Endothelial cell of umbilical vein (primary cell): ENCODE measurements at regions of chr15 and their contacts with region 1.

Region 1: GRCh38 chr15:56245871-56246814 is 2.5 kb upstream of the RFX7 start:
- DNase-seq: peak; percentile 86
- H3K4me3 ChIP-seq: peak overlapping the region in 2 of 3 experiments; percentile 16 to 32
- H3K27ac ChIP-seq: no peak overlapping the region
- H3K4me1 ChIP-seq: peaks cover 22% of the 10 kb centered on the region
- H3K27me3 ChIP-seq: peaks cover 0 to under 1% of the 10 kb centered on the region in 2 experiments
- CTCF ChIP-seq: peak; percentile 100
- POLR2A ChIP-seq: peak; percentile 24

Region 2: GRCh38 chr15:55993111-55993803 is 252.9 kb before region 1 on chr15 and contains the start of gene NEDD4:
- CTCF ChIA-PET with region 1: interaction called, 10 read pairs
- POLR2A ChIA-PET with region 1: no interaction called
- dilution Hi-C with region 1: no loop called
- intact Hi-C with region 1: loop called (anchors 2 kb)
- DNase-seq: peak; percentile 92
- H3K4me3 ChIP-seq: peak within 1 kb of the TSS; percentile 79 to 97 (median 93)
- H3K27ac ChIP-seq: peak within 1 kb of the TSS; percentile 68
- H3K4me1 ChIP-seq: peaks cover 20% of the 10 kb centered on the region
- H3K27me3 ChIP-seq: no peaks in the 10 kb centered on the region
- CTCF ChIP-seq: peak; percentile 35 to 76
- POLR2A ChIP-seq: peak; percentile 75
- total RNA-seq, gene NEDD4: 34.2 and 39.0 TPM in 2 replicates

Region 3: DNA sequence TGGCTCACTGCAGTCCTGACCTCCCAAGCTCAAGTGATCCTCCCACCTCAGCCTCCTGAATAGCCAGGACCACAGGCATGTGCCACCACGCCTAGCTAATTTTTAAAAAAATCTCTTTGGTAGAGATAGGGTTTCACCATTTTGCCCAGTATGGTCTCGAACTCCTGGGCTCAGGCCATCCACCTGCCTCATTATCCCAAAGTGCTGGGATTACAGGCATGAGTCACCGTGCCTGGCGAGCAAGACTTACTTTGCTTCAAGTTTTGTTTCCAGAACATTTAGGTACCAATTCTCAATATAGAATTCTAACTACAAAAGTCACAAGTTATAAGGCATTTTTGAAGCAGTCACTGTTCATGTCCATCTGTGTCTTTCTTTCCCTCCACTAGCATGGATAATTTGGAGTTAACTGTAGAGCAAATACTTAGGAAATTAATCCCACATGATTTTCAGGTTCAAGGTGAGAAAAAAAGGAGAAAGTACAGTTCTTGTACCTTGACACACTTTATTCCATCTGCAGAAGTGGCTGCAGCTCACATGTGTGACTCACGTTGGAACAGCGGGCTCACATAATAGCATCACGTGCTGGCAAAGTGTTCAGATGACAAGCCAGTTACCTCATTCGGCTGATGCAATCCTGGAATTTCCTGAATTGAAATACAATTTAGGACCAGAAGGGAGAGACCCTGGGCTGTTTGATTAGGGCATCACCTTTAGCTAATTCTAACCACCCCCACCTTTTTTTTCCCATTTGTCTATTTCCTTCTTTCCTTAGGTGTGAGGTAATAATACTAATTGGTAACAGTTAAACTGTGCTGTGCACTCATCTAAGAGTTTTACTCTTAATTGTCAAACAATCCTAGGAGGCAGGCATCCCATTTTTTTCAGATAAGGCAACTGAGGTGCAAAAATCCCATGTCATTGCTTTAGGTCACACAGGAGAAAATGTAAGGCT is 205.8 kb before region 1 on chr15:
- CTCF ChIA-PET with region 1: no interaction called
- POLR2A ChIA-PET with region 1: no interaction called
- dilution Hi-C with region 1: no loop called
- intact Hi-C with region 1: loop called (anchors 10 kb)
- DNase-seq: peak; percentile 92
- H3K4me3 ChIP-seq: no peak overlapping the region
- H3K27ac ChIP-seq: peak overlapping the region; percentile 88
- H3K4me1 ChIP-seq: peaks cover 23% of the 10 kb centered on the region
- H3K27me3 ChIP-seq: no peaks in the 10 kb centered on the region
- CTCF ChIP-seq: no peak
- POLR2A ChIP-seq: no peak

Region 4: DNA sequence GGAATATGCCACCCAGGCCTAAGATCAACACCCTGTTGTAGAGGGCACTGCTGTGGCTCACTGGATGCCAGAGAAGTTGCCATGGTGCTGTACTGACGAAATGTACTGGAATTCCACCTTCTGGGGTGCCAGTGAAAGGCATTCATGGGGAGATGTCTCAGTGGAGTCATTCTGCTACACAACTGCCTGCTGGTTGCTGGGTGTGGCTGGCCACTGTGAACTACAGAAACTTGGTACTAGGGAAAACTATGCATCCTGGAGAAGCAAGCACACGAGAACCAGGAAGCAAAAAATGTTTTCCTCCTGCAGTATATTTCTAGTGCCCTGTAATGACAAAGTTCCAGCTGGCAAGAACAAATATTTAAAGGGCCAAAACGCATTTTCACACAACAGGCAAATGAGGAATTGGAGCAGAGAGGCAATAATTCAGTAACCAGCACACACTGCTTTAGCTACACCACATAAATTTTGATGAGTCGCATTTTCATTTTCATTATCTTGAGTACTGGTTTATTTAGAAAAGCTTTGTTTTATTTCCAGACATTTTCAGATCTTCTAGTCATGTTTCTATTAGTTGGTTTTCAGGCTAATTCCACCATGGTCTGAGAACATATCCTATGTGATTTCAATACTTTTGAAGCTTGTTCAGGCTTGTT is 15.8 kb after region 1 on chr15:
- CTCF ChIA-PET with region 1: interaction called, 10 read pairs
- POLR2A ChIA-PET with region 1: no interaction called
- dilution Hi-C with region 1: no loop called
- intact Hi-C with region 1: no loop called
- DNase-seq: no peak
- H3K4me3 ChIP-seq: no peak overlapping the region
- H3K27ac ChIP-seq: no peak overlapping the region
- H3K4me1 ChIP-seq: no peaks in the 10 kb centered on the region
- H3K27me3 ChIP-seq: peaks cover 0 to 4% of the 10 kb centered on the region in 2 experiments
- CTCF ChIP-seq: no peak
- POLR2A ChIP-seq: no peak

Region 5: DNA sequence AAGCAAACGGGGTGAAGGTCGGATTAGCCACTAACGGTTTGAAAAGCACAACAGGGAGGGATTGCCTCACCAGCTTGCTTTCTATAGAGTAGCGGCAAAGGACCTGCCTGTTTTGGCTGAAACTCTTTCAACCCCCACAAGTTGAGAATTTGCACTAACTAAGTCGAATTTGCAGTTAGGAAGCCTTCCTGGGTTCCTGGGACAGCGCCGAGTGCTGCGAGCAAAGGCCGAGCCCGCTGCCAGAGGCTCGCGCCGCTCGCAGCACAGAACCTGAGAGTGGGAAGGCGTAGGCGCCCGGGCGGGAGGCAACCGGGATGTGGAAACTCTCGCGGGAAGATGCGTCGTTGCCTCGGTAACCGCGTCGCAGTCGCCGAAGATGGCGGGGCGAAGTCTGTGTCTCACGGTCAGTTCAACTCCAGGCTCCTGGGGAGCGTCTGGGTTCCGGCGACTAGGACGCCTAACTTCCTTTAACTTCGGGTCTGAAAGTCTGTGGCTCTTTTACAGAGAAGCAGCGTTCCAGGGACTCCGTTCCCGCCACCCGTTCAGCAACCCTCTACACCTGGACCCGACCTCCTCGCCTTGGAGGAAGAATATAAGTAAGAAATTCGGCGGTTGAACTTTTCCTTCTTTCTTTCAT is 119.0 kb after region 1 on chr15 and contains the start of gene TEX9:
- CTCF ChIA-PET with region 1: interaction called, 3 read pairs
- POLR2A ChIA-PET with region 1: no interaction called
- dilution Hi-C with region 1: no loop called
- intact Hi-C with region 1: loop called (anchors 5 kb)
- DNase-seq: peak; percentile 74
- H3K4me3 ChIP-seq: peak within 1 kb of the TSS; percentile 55 to 98 (median 90)
- H3K27ac ChIP-seq: no peak within 1 kb of the TSS
- H3K4me1 ChIP-seq: peaks cover 12% of the 10 kb centered on the region
- H3K27me3 ChIP-seq: peaks cover 0 to 7% of the 10 kb centered on the region in 2 experiments
- CTCF ChIP-seq: no peak
- POLR2A ChIP-seq: no peak
- total RNA-seq, gene TEX9: 1.7 and 2.5 TPM in 2 replicates

Region 6: DNA sequence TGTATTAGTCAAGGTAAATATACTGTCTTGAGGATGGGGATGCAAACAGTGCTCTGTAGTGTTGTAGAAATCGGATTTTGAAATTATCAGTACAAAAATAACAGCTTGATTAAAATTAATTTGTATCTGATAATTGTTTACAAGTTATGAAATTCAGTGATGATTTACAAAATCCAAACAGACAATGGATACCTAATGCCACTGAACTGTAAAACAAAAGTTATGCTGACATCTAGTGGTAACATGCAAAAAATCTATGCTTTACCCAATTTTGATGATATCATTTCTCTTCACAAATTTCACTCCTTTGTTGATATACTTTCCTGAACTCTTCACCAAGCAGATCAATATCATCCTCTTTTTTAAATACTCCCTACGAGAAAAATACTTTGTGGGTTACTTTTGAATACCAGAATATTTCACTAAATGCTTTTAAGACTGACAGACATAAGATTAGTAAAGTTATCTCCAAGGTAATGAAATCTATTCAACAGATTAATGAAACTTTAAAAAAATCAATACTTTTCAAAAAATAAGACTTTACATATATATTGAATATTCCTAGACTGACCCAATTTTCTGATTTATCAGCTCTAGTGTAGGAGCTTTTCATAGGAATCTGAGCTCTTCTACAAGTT is 182.8 kb after region 1 on chr15:
- CTCF ChIA-PET with region 1: interaction called, 99 read pairs
- POLR2A ChIA-PET with region 1: no interaction called
- dilution Hi-C with region 1: no loop called
- intact Hi-C with region 1: loop called (anchors 1 kb)
- DNase-seq: peak; percentile 49
- H3K4me3 ChIP-seq: no peak overlapping the region
- H3K27ac ChIP-seq: no peak overlapping the region
- H3K4me1 ChIP-seq: no peaks in the 10 kb centered on the region
- H3K27me3 ChIP-seq: no peaks in the 10 kb centered on the region
- CTCF ChIP-seq: peak; percentile 14 to 17
- POLR2A ChIP-seq: no peak